ENCODE measurements at regions of chr6 and their contacts with region 1.

Region 1: GRCh38 chr6:83215131-83216047 is 22.2 kb downstream of the RWDD2A start:
- DNase-seq: peak in 3 of 4 donors; percentile 41 to 78 (median 65)
- ATAC-seq: peak; percentile 96
- H3K4me3 ChIP-seq: no peak overlapping the region
- H3K27ac ChIP-seq: no peak overlapping the region
- H3K4me1 ChIP-seq: no peaks in the 10 kb centered on the region
- H3K27me3 ChIP-seq: no peaks in the 10 kb centered on the region
- CTCF ChIP-seq: peak; percentile 59 to 74

Region 2: GRCh38 chr6:83067448-83068413 is 147.7 kb before region 1 on chr6 and contains the start of gene DOP1A:
- intact Hi-C with region 1: loop called in 1 of 2 experiments (anchors 2 kb)
- DNase-seq: peak; percentile 91 to 99 (median 96)
- ATAC-seq: peak; percentile 94
- H3K4me3 ChIP-seq: peak within 1 kb of the TSS; percentile 91 to 97
- H3K27ac ChIP-seq: peak within 1 kb of the TSS; percentile 90
- H3K4me1 ChIP-seq: peaks cover 13 to 54% of the 10 kb centered on the region in 2 donors
- H3K27me3 ChIP-seq: no peaks in the 10 kb centered on the region
- CTCF ChIP-seq: peak; percentile 94 to 95
- polyA plus RNA-seq, gene DOP1A: 32.2 to 42.1 (median 34.9) TPM

Region 3: GRCh38 chr6:83389606-83390005 is 174.2 kb after region 1 on chr6:
- intact Hi-C with region 1: no loop called
- DNase-seq: no peak
- ATAC-seq: no peak
- H3K4me3 ChIP-seq: no peak overlapping the region
- H3K27ac ChIP-seq: no peak overlapping the region
- H3K4me1 ChIP-seq: no peaks in the 10 kb centered on the region
- H3K27me3 ChIP-seq: no peaks in the 10 kb centered on the region
- CTCF ChIP-seq: no peak

Region 4: GRCh38 chr6:83859410-83860358 is 644.3 kb after region 1 on chr6 and contains the start of gene CYB5R4:
- intact Hi-C with region 1: no loop called
- DNase-seq: peak; percentile 93 to 99 (median 96)
- ATAC-seq: peak; percentile 100
- H3K4me3 ChIP-seq: peak within 1 kb of the TSS; percentile 86
- H3K27ac ChIP-seq: peak within 1 kb of the TSS; percentile 85 to 93
- H3K4me1 ChIP-seq: peaks cover 15 to 32% of the 10 kb centered on the region in 2 donors
- H3K27me3 ChIP-seq: peaks cover 0 to 36% of the 10 kb centered on the region in 2 donors
- CTCF ChIP-seq: peak in 1 of 2 donors; percentile 25
- polyA plus RNA-seq, gene CYB5R4: 9.0 to 15.0 (median 12.3) TPM